Tibial artery (tissue), 4 donors: ENCODE measurements at regions of chr5 and their contacts with region 1.

Region 1: GRCh38 chr5:69217548-69218526 is 16.8 kb upstream of the CDK7 start:
- DNase-seq: peak; percentile 98
- H3K4me3 ChIP-seq: peak overlapping the region; percentile 86 to 95
- H3K27ac ChIP-seq: peak overlapping the region; percentile 86 to 92
- H3K4me1 ChIP-seq: peaks cover 0 to 14% (median 6%) of the 10 kb centered on the region in 4 donors
- H3K27me3 ChIP-seq: no peaks in the 10 kb centered on the region
- CTCF ChIP-seq: peak; percentile 44 to 50

Region 2: DNA sequence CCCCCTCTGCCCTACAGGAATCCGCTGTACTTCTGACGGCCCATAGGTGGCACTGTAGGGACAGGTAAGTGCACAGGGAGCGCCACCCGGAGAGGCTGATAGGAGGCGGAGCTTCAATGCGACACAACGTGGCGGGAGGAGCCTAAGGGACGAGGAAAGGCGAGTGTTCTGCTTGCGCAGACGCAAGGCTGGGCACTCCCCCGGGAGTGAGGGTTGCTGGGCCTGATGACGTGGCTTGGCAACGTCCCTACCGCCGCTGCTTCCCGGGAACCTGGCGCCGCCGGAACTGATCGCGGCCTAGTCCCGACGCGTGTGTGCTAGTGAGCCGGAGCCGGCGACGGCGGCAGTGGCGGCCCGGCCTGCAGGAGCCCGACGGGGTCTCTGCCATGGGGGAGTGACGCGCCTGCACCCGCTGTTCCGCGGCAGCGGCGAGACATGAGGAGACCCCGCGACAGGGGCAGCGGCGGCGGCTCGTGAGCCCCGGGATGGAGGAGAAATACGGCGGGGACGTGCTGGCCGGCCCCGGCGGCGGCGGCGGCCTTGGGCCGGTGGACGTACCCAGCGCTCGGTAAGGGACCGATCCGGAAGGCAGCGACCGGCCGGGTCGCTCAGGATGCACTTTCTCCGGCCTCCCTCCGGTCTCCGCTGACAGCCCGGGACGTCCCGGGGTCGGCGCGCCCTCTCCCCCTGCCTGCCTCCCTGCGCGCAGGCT is 123.9 kb before region 1 on chr5 and contains the start of gene SLC30A5:
- intact Hi-C with region 1: loop called (anchors 10 kb)
- DNase-seq: peak; percentile 100
- H3K4me3 ChIP-seq: peak within 1 kb of the TSS; percentile 58 to 96
- H3K27ac ChIP-seq: peak within 1 kb of the TSS; percentile 86 to 99
- H3K4me1 ChIP-seq: peaks cover 0 to 24% (median 11%) of the 10 kb centered on the region in 4 donors
- H3K27me3 ChIP-seq: no peaks in the 10 kb centered on the region
- CTCF ChIP-seq: peak; percentile 86 to 87

Region 3: DNA sequence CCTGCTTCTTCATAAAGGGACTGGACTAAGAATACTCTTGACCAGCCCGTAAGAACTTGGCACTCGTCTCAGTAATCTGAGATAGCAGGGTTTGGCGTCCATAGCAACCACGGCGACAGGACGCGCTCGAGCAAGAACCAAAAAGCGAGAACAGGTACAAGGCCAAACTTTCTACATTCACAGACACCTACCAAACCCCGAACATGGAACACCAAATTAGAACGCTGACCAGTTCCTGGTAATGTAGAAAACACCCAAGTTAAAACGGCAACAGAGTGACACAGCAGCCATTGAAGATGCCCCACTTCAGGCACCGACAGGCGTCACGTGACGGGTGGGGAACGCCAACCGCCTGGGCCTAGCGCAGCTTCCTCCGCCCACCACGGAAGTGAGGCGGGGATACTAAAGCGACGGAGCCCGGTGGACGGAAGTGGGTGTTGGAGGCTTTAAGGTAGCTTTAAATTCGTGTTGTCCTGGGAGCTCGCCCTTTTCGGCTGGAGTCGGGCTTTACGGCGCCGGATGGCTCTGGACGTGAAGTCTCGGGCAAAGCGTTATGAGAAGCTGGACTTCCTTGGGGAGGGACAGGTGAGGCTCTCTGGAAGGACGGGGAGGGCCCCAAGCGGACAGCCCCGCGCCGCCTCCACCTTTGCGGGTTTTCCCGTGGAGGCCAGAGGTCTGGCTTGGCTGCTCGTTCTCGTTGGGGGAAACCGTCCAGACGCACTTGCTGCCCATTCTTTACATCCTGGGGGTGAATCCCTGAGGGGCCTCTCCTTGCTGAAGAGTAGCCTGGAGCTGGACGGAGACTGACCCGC is 16.8 kb after region 1 on chr5 and contains the start of gene CDK7:
- intact Hi-C with region 1: loop called (anchors 1 kb)
- DNase-seq: peak; percentile 94 to 96
- H3K4me3 ChIP-seq: peak within 1 kb of the TSS; percentile 84 to 88
- H3K27ac ChIP-seq: peak within 1 kb of the TSS; percentile 88 to 89
- H3K4me1 ChIP-seq: peaks cover 0 to 51% (median 20%) of the 10 kb centered on the region in 4 donors
- H3K27me3 ChIP-seq: no peaks in the 10 kb centered on the region
- CTCF ChIP-seq: no peak